GM23248 (cell line): ENCODE measurements at regions of chr10 and their contacts with region 1.

Region 1: GRCh38 chr10:24518981-24519597 is 204.6 kb downstream of the ARHGAP21 start:
- DNase-seq: peak; percentile 79
- H3K4me3 ChIP-seq: 0 out of 2 replicates have a peak overlapping the region, but pooled peaks have one; percentile 20
- H3K27ac ChIP-seq: no peak overlapping the region
- H3K4me1 ChIP-seq: 0 out of 2 replicates have a peak, but pooled peaks cover 6% of the 10 kb centered on the region
- H3K27me3 ChIP-seq: no peaks in the 10 kb centered on the region

Region 2: GRCh38 chr10:24000271-24000835 is 518.7 kb before region 1 on chr10:
- in situ Hi-C with region 1: loop called (anchors 5 kb)
- DNase-seq: no peak
- H3K4me3 ChIP-seq: no peak overlapping the region
- H3K27ac ChIP-seq: no peak overlapping the region
- H3K4me1 ChIP-seq: no peaks in the 10 kb centered on the region
- H3K27me3 ChIP-seq: 0 out of 2 replicates have a peak, but pooled peaks cover 2% of the 10 kb centered on the region

Region 3: GRCh38 chr10:24310104-24310503 is 209.0 kb before region 1 on chr10:
- in situ Hi-C with region 1: no loop called
- DNase-seq: no peak
- H3K4me3 ChIP-seq: no peak overlapping the region
- H3K27ac ChIP-seq: no peak overlapping the region
- H3K4me1 ChIP-seq: no peaks in the 10 kb centered on the region
- H3K27me3 ChIP-seq: 0 out of 2 replicates have a peak, but pooled peaks cover 8% of the 10 kb centered on the region